ENCODE measurements at regions of chr10 and their contacts with region 1.

Region 1: GRCh38 chr10:43304687-43305340 is 37.9 kb upstream of the RASGEF1A start:
- DNase-seq: no peak
- H3K4me3 ChIP-seq: peak overlapping the region; percentile 24
- H3K27me3 ChIP-seq: peaks cover 12% of the 10 kb centered on the region
- CTCF ChIP-seq: no peak

Region 2: DNA sequence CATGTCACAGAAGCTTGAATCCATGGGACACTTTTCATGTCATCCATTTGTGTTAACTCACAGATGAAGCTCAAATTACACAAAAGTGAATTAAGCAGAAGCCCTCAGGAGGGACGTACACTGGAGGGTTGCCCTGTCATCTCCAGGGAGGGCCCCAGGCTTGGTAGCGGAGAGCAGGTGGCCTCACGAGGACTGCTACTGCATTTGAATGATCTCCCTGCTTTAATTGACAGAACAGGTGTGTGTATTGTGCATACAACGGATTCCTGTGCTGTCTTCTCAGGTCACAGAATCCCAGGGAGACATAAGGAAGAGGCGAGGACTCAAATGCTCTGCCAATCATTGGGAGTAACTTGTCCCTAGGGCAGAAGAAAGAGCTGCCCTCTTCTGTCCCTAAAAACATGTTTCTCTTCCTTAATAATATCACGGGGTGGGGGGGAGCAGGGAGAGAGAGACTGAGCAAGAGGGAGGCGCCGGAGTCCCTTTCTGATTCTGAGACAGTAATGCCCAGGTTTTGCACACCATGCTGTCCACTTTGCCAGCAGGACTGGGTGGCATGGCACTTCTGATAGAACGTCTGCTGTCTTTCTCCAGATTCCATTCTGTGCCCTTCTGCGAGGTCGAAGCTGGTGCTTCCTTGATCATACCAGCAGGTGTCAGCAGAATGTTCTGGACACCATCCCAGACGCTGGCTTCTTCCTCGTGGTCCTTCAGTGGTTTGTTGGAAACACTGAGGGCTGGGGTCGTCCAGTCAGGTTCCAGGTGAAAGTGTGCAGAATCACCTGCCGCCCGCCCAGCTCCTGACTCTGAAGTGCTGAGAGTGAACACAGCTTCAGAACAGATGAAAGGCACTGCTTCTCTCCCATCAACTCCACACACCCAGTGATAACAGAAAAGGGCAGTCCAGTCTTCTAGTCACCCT is 11.8 kb before region 1 on chr10:
- CTCF ChIA-PET with region 1: interaction called, 24 read pairs
- POLR2A ChIA-PET with region 1: no interaction called
- DNase-seq: no peak
- H3K4me3 ChIP-seq: no peak overlapping the region
- H3K27me3 ChIP-seq: peaks cover 7% of the 10 kb centered on the region
- CTCF ChIP-seq: peak; percentile 79